ENCODE measurements at regions of chr20 and their contacts with region 1.

Region 1: GRCh38 chr20:58388882-58389323 is at the start of gene VAPB:
- DNase-seq: peak; percentile 97
- H3K4me3 Mint-ChIP-seq: peak within 1 kb of the TSS; percentile 92
- H3K27ac Mint-ChIP-seq: peak within 1 kb of the TSS; percentile 92
- H3K4me1 Mint-ChIP-seq: peaks cover 38% of the 10 kb centered on the region
- H3K27me3 Mint-ChIP-seq: peaks cover 8% of the 10 kb centered on the region
- total RNA-seq, gene VAPB: 31.3 to 31.5 TPM

Region 2: GRCh38 chr20:58309575-58310290 is 79.2 kb before region 1 on chr20 and contains the start of gene RAB22A:
- CTCF ChIA-PET with region 1: interaction called, 3 read pairs
- POLR2A ChIA-PET with region 1: interaction called, 23 read pairs
- DNase-seq: peak; percentile 86
- H3K4me3 Mint-ChIP-seq: peak within 1 kb of the TSS; percentile 93
- H3K27ac Mint-ChIP-seq: peak within 1 kb of the TSS; percentile 82
- H3K4me1 Mint-ChIP-seq: peaks cover 68% of the 10 kb centered on the region
- H3K27me3 Mint-ChIP-seq: no peaks in the 10 kb centered on the region
- total RNA-seq, gene RAB22A: 14.7 to 14.8 TPM

Region 3: GRCh38 chr20:58402305-58402704 is 13.4 kb after region 1 on chr20:
- CTCF ChIA-PET with region 1: interaction called, 3 read pairs
- POLR2A ChIA-PET with region 1: interaction called, 16 read pairs
- DNase-seq: no peak
- H3K4me3 Mint-ChIP-seq: no peak overlapping the region
- H3K27ac Mint-ChIP-seq: no peak overlapping the region
- H3K4me1 Mint-ChIP-seq: peaks cover 28% of the 10 kb centered on the region
- H3K27me3 Mint-ChIP-seq: no peaks in the 10 kb centered on the region

Region 4: GRCh38 chr20:58407966-58408557 is 19.2 kb after region 1 on chr20:
- CTCF ChIA-PET with region 1: interaction called, 3 read pairs
- POLR2A ChIA-PET with region 1: interaction called, 11 read pairs
- DNase-seq: peak; percentile 23
- H3K4me3 Mint-ChIP-seq: peak overlapping the region; percentile 51
- H3K27ac Mint-ChIP-seq: peak overlapping the region; percentile 81
- H3K4me1 Mint-ChIP-seq: peaks cover 36% of the 10 kb centered on the region
- H3K27me3 Mint-ChIP-seq: no peaks in the 10 kb centered on the region

Measured in activated CD4-positive, alpha-beta memory T cell treated with anti-CD3 and anti-CD28 coated beads, Interleukin-2, amount 10 ng/mL, durations not matched to agents 7 days and 5 days (primary cell).